ENCODE measurements at regions of chr3 and their contacts with region 1.

Region 1: GRCh38 chr3:197711973-197712707 is 24.6 kb downstream of the RUBCN start:
- DNase-seq: peak; percentile 86 to 97 (median 90)
- H3K4me3 ChIP-seq: peak overlapping the region in 1 of 2 donors; percentile 30
- H3K4me3 Mint-ChIP-seq: peak overlapping the region; percentile 81 to 97 (median 92)
- H3K27ac ChIP-seq: peak overlapping the region; percentile 83
- H3K27ac Mint-ChIP-seq: peak overlapping the region; percentile 85 to 99 (median 99)
- H3K4me1 ChIP-seq: peaks cover 17% of the 10 kb centered on the region
- H3K4me1 Mint-ChIP-seq: peaks cover 17 to 20% (median 18%) of the 10 kb centered on the region in 4 donors
- H3K27me3 ChIP-seq: no peaks in the 10 kb centered on the region
- H3K27me3 Mint-ChIP-seq: no peaks in the 10 kb centered on the region

Region 2: GRCh38 chr3:197700095-197700494 is 12.0 kb before region 1 on chr3:
- CTCF ChIA-PET with region 1: interaction called, 6 read pairs
- POLR2A ChIA-PET with region 1: interaction called, 19 read pairs
- intact Hi-C with region 1: no loop called
- DNase-seq: no peak
- H3K4me3 ChIP-seq: no peak overlapping the region
- H3K4me3 Mint-ChIP-seq: no peak overlapping the region
- H3K27ac ChIP-seq: no peak overlapping the region
- H3K27ac Mint-ChIP-seq: peak overlapping the region in 1 of 7 donors; percentile 11
- H3K4me1 ChIP-seq: no peaks in the 10 kb centered on the region
- H3K4me1 Mint-ChIP-seq: peaks cover 0 to 2% (median 0%) of the 10 kb centered on the region in 4 donors
- H3K27me3 ChIP-seq: no peaks in the 10 kb centered on the region
- H3K27me3 Mint-ChIP-seq: no peaks in the 10 kb centered on the region

Region 3: GRCh38 chr3:197736491-197737318 is 24.6 kb after region 1 on chr3 and contains the start of gene RUBCN:
- CTCF ChIA-PET with region 1: interaction called, 5 read pairs
- POLR2A ChIA-PET with region 1: interaction called, 78 read pairs
- intact Hi-C with region 1: loop called (anchors 1 kb)
- DNase-seq: peak; percentile 93 to 94 (median 94)
- H3K4me3 ChIP-seq: peak within 1 kb of the TSS; percentile 62 to 87
- H3K4me3 Mint-ChIP-seq: peak within 1 kb of the TSS; percentile 95 to 99 (median 98)
- H3K27ac ChIP-seq: peak within 1 kb of the TSS; percentile 80
- H3K27ac Mint-ChIP-seq: peak within 1 kb of the TSS; percentile 89 to 99 (median 98)
- H3K4me1 ChIP-seq: peaks cover 33% of the 10 kb centered on the region
- H3K4me1 Mint-ChIP-seq: peaks cover 24 to 47% (median 32%) of the 10 kb centered on the region in 4 donors
- H3K27me3 ChIP-seq: no peaks in the 10 kb centered on the region
- H3K27me3 Mint-ChIP-seq: no peaks in the 10 kb centered on the region
- total RNA-seq, gene RUBCN: 64.0 to 69.6 TPM

Region 4: DNA sequence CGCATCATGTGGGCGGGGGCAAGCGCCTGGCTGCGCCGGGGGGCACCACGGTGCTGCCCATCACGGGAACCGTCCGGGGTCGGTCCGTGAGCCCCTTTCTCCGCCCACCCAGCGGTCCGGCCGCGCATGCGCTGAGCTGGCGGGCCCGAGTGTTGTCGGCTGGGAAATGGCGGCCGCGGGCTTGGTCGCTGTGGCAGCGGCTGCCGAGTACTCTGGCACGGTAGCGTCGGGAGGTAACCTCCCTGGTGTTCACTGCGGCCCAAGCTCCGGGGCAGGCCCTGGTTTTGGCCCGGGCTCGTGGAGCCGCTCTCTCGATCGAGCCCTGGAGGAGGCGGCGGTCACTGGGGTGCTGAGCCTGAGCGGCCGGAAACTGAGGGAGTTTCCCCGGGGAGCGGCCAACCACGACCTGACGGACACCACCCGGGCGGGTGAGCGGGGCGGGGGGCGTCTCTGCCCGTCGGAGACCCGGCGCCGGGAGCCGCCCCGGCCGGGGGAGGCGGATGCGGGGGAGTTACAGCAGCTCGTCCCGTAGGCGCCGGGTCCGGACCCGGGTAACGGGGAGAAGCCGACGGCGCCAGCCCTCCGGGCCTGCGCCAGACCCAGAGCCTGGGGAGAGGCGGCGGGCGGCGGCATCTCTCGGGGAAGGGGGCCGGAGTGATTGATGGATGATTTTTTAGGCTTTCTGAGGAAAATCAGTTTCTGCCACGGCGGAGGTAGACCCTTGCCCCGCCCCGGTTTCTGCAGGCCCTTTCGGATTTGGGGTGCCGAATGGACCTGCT is 79.2 kb after region 1 on chr3 and contains the start of gene LRCH3:
- CTCF ChIA-PET with region 1: no interaction called
- POLR2A ChIA-PET with region 1: interaction called, 26 read pairs
- intact Hi-C with region 1: loop called (anchors 1 kb)
- DNase-seq: peak; percentile 77 to 83 (median 82)
- H3K4me3 ChIP-seq: peak within 1 kb of the TSS; percentile 91 to 96
- H3K4me3 Mint-ChIP-seq: peak within 1 kb of the TSS; percentile 94 to 99 (median 98)
- H3K27ac ChIP-seq: peak within 1 kb of the TSS; percentile 94
- H3K27ac Mint-ChIP-seq: peak within 1 kb of the TSS; percentile 95 to 99 (median 98)
- H3K4me1 ChIP-seq: peaks cover 33% of the 10 kb centered on the region
- H3K4me1 Mint-ChIP-seq: peaks cover 27 to 49% (median 37%) of the 10 kb centered on the region in 4 donors
- H3K27me3 ChIP-seq: no peaks in the 10 kb centered on the region
- H3K27me3 Mint-ChIP-seq: no peaks in the 10 kb centered on the region
- total RNA-seq, gene LRCH3: 76.0 to 87.7 TPM

Region 5: GRCh38 chr3:197847866-197848401 is 135.8 kb after region 1 on chr3:
- CTCF ChIA-PET with region 1: interaction called, 3 read pairs
- POLR2A ChIA-PET with region 1: interaction called, 10 read pairs
- intact Hi-C with region 1: no loop called
- DNase-seq: peak; percentile 45 to 59 (median 49)
- H3K4me3 ChIP-seq: peak overlapping the region in 1 of 2 donors; percentile 34
- H3K4me3 Mint-ChIP-seq: peak overlapping the region; percentile 77 to 91 (median 84)
- H3K27ac ChIP-seq: peak overlapping the region; percentile 63
- H3K27ac Mint-ChIP-seq: peak overlapping the region; percentile 65 to 96 (median 94)
- H3K4me1 ChIP-seq: peaks cover 28% of the 10 kb centered on the region
- H3K4me1 Mint-ChIP-seq: peaks cover 16 to 32% (median 27%) of the 10 kb centered on the region in 4 donors
- H3K27me3 ChIP-seq: no peaks in the 10 kb centered on the region
- H3K27me3 Mint-ChIP-seq: no peaks in the 10 kb centered on the region